ENCODE measurements at regions of chr1 and their contacts with region 1.

Region 1: GRCh38 chr1:115609021-115609420 is 32.7 kb upstream of the VANGL1 start:
- DNase-seq: no peak
- ATAC-seq: no peak; the same call in 2 of the 3 replicates
- H3K4me3 ChIP-seq: no peak overlapping the region
- H3K27ac ChIP-seq: no peak overlapping the region
- H3K4me1 ChIP-seq: no peaks in the 10 kb centered on the region
- H3K27me3 ChIP-seq: peaks cover 0 to 24% of the 10 kb centered on the region in 2 experiments; a peak in 2 of 5 replicates
- CTCF ChIP-seq: no peak
- EP300 ChIP-seq: no peak
- POLR2A ChIP-seq: no peak
- RAD21 ChIP-seq: no peak

Region 2: DNA sequence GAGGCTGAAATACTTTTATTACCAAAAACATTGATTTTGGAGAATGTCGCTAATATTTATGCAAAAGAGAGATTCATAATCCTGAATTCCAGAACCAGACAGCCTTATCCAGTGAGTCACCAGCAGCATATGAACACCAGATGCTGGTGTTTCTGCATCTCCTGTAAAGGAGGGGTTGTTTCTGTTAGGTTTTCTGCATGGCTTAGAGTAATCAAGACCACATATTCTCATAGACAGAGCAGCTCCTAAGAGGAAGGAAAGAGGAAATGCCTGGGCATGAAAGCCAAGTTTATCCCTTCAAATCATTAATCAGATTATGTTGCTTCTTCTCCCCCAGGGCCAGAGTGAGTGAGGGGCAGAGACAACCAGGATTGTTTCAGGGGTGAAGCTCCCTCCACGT is 357.2 kb before region 1 on chr1:
- CTCF ChIA-PET with region 1: no interaction called
- POLR2A ChIA-PET with region 1: no interaction called
- in situ Hi-C with region 1: no loop called
- intact Hi-C with region 1: no loop called
- DNase-seq: no peak
- ATAC-seq: no peak
- H3K4me3 ChIP-seq: no peak overlapping the region
- H3K27ac ChIP-seq: no peak overlapping the region
- H3K4me1 ChIP-seq: no peaks in the 10 kb centered on the region
- H3K27me3 ChIP-seq: no peaks in the 10 kb centered on the region
- CTCF ChIP-seq: no peak
- EP300 ChIP-seq: no peak
- POLR2A ChIP-seq: no peak
- RAD21 ChIP-seq: no peak

Region 3: DNA sequence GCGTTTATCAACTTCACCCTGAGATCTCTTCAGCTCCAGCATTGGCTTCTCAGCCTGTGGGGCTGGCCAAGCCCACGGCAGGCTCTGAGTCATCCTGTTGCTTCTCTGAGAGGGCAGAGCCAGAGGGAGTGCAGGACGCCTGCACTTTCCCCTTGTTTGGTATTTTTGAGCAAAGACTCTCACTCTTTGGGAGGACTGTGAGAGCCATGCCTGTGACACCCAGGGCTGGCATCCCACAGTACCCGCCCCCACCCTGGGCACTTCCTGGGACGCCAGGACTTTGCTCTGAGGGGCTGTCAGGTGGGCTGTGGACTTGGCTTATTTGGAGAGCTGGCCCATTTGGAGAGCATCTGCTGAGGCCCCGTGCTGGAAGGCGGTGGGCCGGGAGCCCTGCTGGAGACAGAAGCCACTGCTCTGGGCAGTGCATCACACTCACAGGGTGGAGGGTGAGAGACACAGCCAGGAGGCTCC is 70.2 kb after region 1 on chr1:
- CTCF ChIA-PET with region 1: interaction called, 9 read pairs
- POLR2A ChIA-PET with region 1: no interaction called
- in situ Hi-C with region 1: no loop called
- intact Hi-C with region 1: loop called (anchors 1 kb)
- DNase-seq: peak in 1 of 4 experiments; percentile 23
- ATAC-seq: no peak; the same call in 2 of the 3 replicates
- H3K4me3 ChIP-seq: no peak overlapping the region
- H3K27ac ChIP-seq: no peak overlapping the region
- H3K4me1 ChIP-seq: peaks cover 0 to 3% of the 10 kb centered on the region in 2 experiments; a peak in 1 of 5 replicates
- H3K27me3 ChIP-seq: no peaks in the 10 kb centered on the region
- CTCF ChIP-seq: no peak
- EP300 ChIP-seq: no peak
- POLR2A ChIP-seq: no peak
- RAD21 ChIP-seq: no peak

Region 4: GRCh38 chr1:115706587-115707425 is 97.8 kb after region 1 on chr1:
- CTCF ChIA-PET with region 1: interaction called, 22 read pairs
- POLR2A ChIA-PET with region 1: interaction called, 3 read pairs
- in situ Hi-C with region 1: loop called (anchors 5 kb)
- intact Hi-C with region 1: loop called (anchors 1 kb)
- DNase-seq: peak; percentile 52 to 67 (median 62)
- ATAC-seq: peak; percentile 91
- H3K4me3 ChIP-seq: no peak overlapping the region
- H3K27ac ChIP-seq: no peak overlapping the region
- H3K4me1 ChIP-seq: no peaks in the 10 kb centered on the region
- H3K27me3 ChIP-seq: peaks cover 23 to 24% of the 10 kb centered on the region in 2 experiments
- CTCF ChIP-seq: peak; percentile 72 to 78 (median 77)
- EP300 ChIP-seq: no peak
- POLR2A ChIP-seq: no peak
- RAD21 ChIP-seq: peak; percentile 57 to 63

Region 5: DNA sequence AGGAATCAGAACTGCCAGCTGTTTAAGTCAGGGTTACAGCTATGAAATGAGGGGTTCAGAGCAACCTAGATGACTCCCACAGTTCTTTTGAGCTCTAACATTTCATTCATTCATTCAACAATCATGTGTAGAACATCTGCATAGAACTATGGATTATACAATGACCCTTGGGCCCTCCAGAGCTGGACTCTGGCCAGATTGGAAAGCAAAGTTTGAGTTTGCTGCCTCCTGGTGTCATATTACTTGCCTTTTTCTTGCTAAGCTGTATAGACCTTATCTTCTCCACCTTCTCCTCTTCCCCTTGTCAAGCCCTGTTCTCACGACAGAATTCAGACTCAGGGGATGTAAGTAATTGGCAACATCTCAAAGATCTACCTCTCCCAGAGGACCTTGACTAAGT is 155.5 kb after region 1 on chr1:
- CTCF ChIA-PET with region 1: interaction called, 6 read pairs
- POLR2A ChIA-PET with region 1: no interaction called
- in situ Hi-C with region 1: no loop called
- intact Hi-C with region 1: loop called (anchors 2 kb)
- DNase-seq: peak; percentile 24 to 44 (median 29)
- ATAC-seq: peak; percentile 76
- H3K4me3 ChIP-seq: no peak overlapping the region
- H3K27ac ChIP-seq: no peak overlapping the region
- H3K4me1 ChIP-seq: no peaks in the 10 kb centered on the region
- H3K27me3 ChIP-seq: peaks cover 5 to 17% of the 10 kb centered on the region in 2 experiments; a peak in 4 of 5 replicates
- CTCF ChIP-seq: peak; percentile 34 to 57 (median 35); a peak in 4 of 6 replicates
- EP300 ChIP-seq: no peak
- POLR2A ChIP-seq: no peak
- RAD21 ChIP-seq: peak; percentile 68 to 83

Region 6: DNA sequence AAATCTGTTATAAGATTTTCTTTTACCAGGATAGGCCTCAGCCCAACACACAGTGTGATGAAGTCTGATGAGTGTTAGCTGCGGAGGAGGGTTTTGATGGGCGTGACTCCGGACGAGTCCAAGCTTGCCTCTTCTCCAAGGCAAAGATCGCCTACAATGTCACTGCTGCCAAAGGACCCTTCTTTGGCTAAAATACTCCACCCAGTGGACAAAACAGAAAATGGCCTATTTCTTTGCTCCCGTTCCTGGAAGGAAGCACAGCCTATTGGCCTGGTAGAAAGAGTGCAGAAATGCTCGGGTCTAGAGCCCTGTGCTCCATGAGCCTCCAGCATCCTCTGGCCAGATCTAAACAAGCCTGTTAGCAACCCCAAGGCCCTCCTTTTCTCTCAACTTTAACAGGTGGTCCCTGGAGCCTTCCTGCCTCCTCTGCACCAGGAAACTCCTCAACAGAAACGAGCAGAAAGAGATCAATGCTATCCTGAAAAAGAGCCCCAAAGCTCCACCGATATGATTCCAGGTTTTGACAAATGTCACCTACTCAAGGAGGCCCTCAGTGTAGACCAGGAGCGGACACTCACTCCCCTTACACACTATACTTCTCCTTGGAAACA is 162.9 kb after region 1 on chr1:
- CTCF ChIA-PET with region 1: interaction called, 14 read pairs
- POLR2A ChIA-PET with region 1: no interaction called
- in situ Hi-C with region 1: loop called (anchors 5 kb)
- intact Hi-C with region 1: loop called (anchors 1 kb)
- DNase-seq: peak; percentile 66 to 78 (median 70)
- ATAC-seq: peak; percentile 97
- H3K4me3 ChIP-seq: no peak overlapping the region
- H3K27ac ChIP-seq: no peak overlapping the region
- H3K4me1 ChIP-seq: no peaks in the 10 kb centered on the region
- H3K27me3 ChIP-seq: peaks cover 7 to 16% of the 10 kb centered on the region in 2 experiments; a peak in 4 of 5 replicates
- CTCF ChIP-seq: peak; percentile 82 to 92 (median 84)
- EP300 ChIP-seq: no peak
- POLR2A ChIP-seq: no peak
- RAD21 ChIP-seq: peak; percentile 94 to 97

Region 7: DNA sequence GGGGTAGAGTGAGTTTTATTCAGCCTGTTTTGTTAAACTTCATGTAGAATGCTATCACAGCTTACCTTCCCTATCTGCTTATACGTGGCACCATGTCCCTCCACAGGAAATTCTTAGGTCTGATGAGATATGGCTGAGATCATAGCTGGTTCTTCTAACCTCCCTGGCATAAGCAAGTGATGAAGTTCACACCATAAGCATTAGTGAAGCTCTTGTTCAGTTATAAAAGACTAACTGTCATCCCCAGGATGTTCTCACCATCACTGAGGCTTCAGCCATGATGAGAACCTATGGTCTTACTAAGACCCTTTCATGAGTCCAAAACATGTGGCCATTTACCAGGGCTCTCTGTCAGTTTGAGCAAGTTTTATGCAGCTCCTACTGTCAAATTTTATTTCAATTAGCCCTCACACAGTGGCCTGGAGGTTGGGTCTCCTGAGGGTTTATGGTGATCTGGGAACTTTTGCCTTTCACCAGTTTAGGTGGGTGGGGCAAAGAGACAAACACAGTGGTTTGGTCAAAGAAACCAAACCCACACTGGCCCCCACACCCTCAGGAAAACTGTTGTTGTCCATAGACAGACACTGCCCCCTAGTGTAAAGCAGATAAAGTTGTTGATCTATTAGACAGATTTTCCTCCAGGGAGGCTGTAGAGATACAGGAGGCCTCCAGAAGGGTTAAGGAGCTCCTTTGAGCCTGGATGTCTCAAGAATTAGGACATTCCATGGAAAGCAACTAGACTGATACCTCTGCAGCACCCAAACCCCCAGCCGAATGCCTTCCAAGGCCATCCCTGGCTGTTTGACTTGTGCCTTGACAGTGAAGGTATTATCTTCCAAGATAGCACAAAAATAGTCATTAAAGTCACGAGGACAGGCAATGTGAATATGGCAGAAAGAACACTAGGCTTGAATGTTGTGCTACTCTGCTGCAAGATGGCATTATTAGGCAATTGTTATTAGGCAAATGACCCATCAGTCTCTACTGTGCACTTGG is 372.3 kb after region 1 on chr1:
- CTCF ChIA-PET with region 1: no interaction called
- POLR2A ChIA-PET with region 1: no interaction called
- in situ Hi-C with region 1: loop called (anchors 5 kb)
- intact Hi-C with region 1: loop called (anchors 1 kb)
- DNase-seq: peak; percentile 58 to 73 (median 67)
- ATAC-seq: peak; percentile 84
- H3K4me3 ChIP-seq: no peak overlapping the region
- H3K27ac ChIP-seq: no peak overlapping the region
- H3K4me1 ChIP-seq: peaks cover 0 to 6% of the 10 kb centered on the region in 2 experiments; a peak in 2 of 5 replicates
- H3K27me3 ChIP-seq: peaks cover 8 to 12% of the 10 kb centered on the region in 2 experiments; a peak in 4 of 5 replicates
- CTCF ChIP-seq: peak; percentile 80 to 91 (median 81)
- EP300 ChIP-seq: no peak
- POLR2A ChIP-seq: no peak
- RAD21 ChIP-seq: peak; percentile 89